ENCODE measurements at regions of chr12 and their contacts with region 1.

Region 1: DNA sequence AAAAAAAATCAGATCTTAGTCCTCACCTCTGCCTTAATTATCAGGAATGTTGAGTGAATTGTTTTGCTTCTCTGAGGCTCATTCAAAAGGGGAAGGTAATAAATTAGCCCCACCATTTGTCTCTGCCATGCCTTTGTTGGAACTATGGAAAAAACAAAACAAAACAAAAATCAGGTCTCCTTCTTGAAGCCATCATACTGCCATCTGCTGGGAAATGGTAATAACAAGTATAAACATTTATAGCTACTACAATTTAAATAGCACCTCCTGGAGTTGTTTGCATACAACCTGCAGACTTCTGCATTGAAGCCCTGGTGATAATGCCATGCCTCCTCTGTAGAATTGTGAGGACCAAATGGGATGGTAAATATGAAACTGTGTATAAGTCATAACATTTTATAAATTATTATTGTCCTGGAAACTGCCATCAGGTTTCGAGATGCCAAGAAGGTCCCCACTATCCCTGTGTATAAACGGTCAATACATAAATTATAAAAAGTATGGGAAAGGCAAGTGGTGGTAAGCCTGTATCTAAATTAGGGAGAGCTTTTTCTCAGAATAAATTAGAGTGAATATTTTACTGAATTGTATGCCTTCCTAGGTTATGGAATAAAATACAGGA is 87.2 kb upstream of the FGD4 start:
- DNase-seq: no peak
- H3K4me3 Mint-ChIP-seq: no peak overlapping the region
- H3K27ac Mint-ChIP-seq: no peak overlapping the region
- H3K4me1 Mint-ChIP-seq: peaks cover 2% of the 10 kb centered on the region
- H3K27me3 Mint-ChIP-seq: no peaks in the 10 kb centered on the region

Region 2: GRCh38 chr12:31406345-31406744 is 905.8 kb before region 1 on chr12:
- CTCF ChIA-PET with region 1: no interaction called
- intact Hi-C with region 1: loop called (anchors 5 kb)
- DNase-seq: no peak
- H3K4me3 Mint-ChIP-seq: no peak overlapping the region
- H3K27ac Mint-ChIP-seq: no peak overlapping the region
- H3K4me1 Mint-ChIP-seq: no peaks in the 10 kb centered on the region
- H3K27me3 Mint-ChIP-seq: no peaks in the 10 kb centered on the region

Region 3: GRCh38 chr12:31650927-31651326 is 661.2 kb before region 1 on chr12:
- CTCF ChIA-PET with region 1: interaction called, 29 read pairs
- intact Hi-C with region 1: loop called (anchors 1 kb)
- DNase-seq: no peak
- H3K4me3 Mint-ChIP-seq: no peak overlapping the region
- H3K27ac Mint-ChIP-seq: no peak overlapping the region
- H3K4me1 Mint-ChIP-seq: peaks cover 10% of the 10 kb centered on the region
- H3K27me3 Mint-ChIP-seq: no peaks in the 10 kb centered on the region

Region 4: GRCh38 chr12:31682136-31682962 is 629.8 kb before region 1 on chr12:
- CTCF ChIA-PET with region 1: interaction called, 3 read pairs
- intact Hi-C with region 1: loop called (anchors 2 kb)
- DNase-seq: peak; percentile 83
- H3K4me3 Mint-ChIP-seq: no peak overlapping the region
- H3K27ac Mint-ChIP-seq: peak overlapping the region; percentile 84
- H3K4me1 Mint-ChIP-seq: peaks cover 5% of the 10 kb centered on the region
- H3K27me3 Mint-ChIP-seq: no peaks in the 10 kb centered on the region

Region 5: DNA sequence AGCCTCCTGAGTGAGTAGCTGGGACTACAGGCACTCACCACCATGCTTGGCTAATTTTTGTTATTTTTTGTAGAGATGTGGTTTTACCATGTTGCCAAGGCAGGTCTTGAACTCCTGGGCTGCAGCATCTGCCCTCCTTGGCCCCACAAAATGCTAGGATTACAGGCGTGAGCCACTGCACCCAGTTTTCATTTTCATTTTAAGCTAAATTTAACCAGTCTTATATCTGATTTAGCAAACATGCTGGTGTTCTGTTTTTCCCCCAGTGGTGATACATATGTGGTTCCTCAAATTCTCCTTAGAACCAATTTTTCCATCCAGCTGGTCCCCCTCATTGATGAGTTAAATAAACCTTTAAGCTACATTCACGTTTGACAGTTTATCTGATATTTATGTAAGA is 249.3 kb before region 1 on chr12:
- CTCF ChIA-PET with region 1: interaction called, 12 read pairs
- intact Hi-C with region 1: loop called (anchors 1 kb)
- DNase-seq: no peak
- H3K4me3 Mint-ChIP-seq: no peak overlapping the region
- H3K27ac Mint-ChIP-seq: no peak overlapping the region
- H3K4me1 Mint-ChIP-seq: peaks cover 11% of the 10 kb centered on the region
- H3K27me3 Mint-ChIP-seq: no peaks in the 10 kb centered on the region

Measured in activated naive CD4-positive, alpha-beta T cell treated with anti-CD3 and anti-CD28 coated beads for 36 hours (primary cell).